Activated B cell treated with CpG ODN at 0.5 μM for 24 hours (primary cell): ENCODE measurements at regions of chr16 and their contacts with region 1.

Region 1: GRCh38 chr16:19555162-19555937 is at the start of gene VPS35L:
- DNase-seq: peak; percentile 95
- ATAC-seq: peak; percentile 94
- H3K4me3 Mint-ChIP-seq: peak within 1 kb of the TSS; percentile 95
- H3K27ac Mint-ChIP-seq: peak within 1 kb of the TSS; percentile 91
- H3K4me1 Mint-ChIP-seq: peaks cover 26% of the 10 kb centered on the region
- H3K27me3 Mint-ChIP-seq: no peaks in the 10 kb centered on the region
- CTCF ChIP-seq: no peak
- total RNA-seq, gene VPS35L: 59.7 and 66.0 TPM in 2 replicates

Region 2: GRCh38 chr16:18789850-18790724 is 765.3 kb before region 1 on chr16 and contains the start of gene RPS15A:
- CTCF ChIA-PET with region 1: no interaction called
- POLR2A ChIA-PET with region 1: interaction called, 17 read pairs
- intact Hi-C with region 1: no loop called
- DNase-seq: peak; percentile 79
- ATAC-seq: peak; percentile 98
- H3K4me3 Mint-ChIP-seq: peak within 1 kb of the TSS; percentile 98
- H3K27ac Mint-ChIP-seq: peak within 1 kb of the TSS; percentile 89
- H3K4me1 Mint-ChIP-seq: peaks cover 51% of the 10 kb centered on the region
- H3K27me3 Mint-ChIP-seq: no peaks in the 10 kb centered on the region
- CTCF ChIP-seq: no peak
- total RNA-seq, gene RPS15A: 2,443 and 2,956 TPM in 2 replicates

Region 3: DNA sequence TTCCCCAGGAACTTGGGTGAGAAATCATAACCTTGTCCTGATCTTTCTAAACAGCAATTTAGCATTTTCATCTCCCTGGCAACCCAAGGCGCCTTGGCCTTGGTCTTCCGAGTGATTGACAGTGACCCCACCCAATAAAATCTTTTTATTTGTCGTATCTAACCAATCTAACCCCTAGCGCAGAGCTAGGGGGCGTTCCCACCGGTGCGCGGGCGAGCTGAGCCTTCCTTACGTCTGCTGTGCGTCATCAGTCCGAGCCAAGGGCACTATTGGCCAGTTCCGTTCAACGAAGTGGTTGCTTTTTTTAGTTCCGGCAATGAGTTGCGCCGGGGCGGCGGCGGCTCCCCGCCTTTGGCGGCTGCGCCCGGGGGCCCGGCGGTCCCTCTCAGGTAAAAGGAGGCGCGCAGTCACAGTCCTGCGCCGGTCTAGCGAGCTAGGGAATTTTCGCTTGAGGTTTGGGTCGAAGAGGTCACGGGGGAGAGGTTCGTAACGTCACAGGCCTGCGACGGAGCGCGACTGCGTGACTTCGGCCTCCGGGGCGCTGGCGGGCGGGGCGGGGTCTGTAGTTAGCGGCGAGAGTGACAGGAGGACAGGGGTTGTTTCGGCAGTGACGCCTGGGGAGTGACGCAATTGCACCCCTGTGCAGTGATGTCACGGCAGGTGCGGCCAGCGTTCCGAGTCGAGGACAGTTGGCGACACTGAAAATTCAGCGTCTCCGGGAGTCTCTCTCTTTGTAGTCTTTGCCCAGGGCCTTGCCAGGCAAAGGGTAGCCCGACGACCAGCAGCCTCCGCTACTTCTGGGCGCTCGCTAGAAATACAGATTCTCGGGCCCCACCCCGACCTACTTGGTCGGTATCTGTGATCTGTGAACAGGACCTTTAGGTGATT is 487.8 kb before region 1 on chr16 and contains the start of gene COQ7:
- CTCF ChIA-PET with region 1: no interaction called
- POLR2A ChIA-PET with region 1: interaction called, 13 read pairs
- intact Hi-C with region 1: loop called (anchors 1 kb)
- DNase-seq: peak; percentile 95
- ATAC-seq: peak; percentile 90
- H3K4me3 Mint-ChIP-seq: peak within 1 kb of the TSS; percentile 93
- H3K27ac Mint-ChIP-seq: peak within 1 kb of the TSS; percentile 97
- H3K4me1 Mint-ChIP-seq: peaks cover 17% of the 10 kb centered on the region
- H3K27me3 Mint-ChIP-seq: peaks cover 4% of the 10 kb centered on the region
- CTCF ChIP-seq: no peak
- total RNA-seq, gene COQ7: 13.6 and 17.5 TPM in 2 replicates

Region 4: DNA sequence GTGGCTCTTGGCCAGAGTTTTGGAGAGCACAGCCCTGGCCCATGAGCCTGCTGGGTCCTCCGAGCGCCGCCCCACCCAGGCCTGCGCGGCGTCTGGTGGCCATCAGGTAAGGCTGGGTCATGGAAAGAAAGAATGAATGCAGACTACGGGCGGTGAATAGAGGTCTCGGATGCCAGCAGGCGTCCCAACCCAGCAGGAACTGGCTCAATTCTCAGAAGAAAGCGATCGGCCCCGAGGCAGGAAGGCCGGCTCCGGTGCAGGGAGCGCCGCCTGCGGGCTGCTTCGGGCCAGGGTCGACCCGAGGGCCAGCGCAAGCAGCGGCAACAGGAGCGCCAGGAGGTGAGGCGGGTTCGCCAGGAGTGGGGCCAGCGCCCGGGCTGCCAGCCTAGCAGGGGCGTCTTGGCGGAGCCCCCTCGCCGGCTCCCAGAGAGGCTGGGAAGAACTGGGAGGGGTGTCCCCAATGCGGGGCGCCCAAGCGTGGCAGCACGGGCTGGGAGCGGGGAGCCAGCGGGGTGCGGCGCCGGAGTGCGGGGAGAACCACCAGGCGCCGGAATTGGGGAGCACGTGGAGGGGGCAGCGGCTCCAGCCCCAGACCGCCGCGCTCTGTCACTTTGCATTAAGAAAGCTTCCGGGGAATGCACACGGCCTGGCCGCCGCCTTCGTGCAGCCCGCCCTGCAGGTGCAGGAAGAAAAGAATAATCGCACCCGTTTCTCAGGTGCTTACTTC is 144.8 kb before region 1 on chr16:
- CTCF ChIA-PET with region 1: no interaction called
- POLR2A ChIA-PET with region 1: no interaction called
- intact Hi-C with region 1: no loop called
- DNase-seq: peak; percentile 18
- ATAC-seq: peak; percentile 14
- H3K4me3 Mint-ChIP-seq: peak overlapping the region; percentile 79
- H3K27ac Mint-ChIP-seq: peak overlapping the region; percentile 24
- H3K4me1 Mint-ChIP-seq: peaks cover 8% of the 10 kb centered on the region
- H3K27me3 Mint-ChIP-seq: peaks cover 34% of the 10 kb centered on the region
- CTCF ChIP-seq: no peak